Endothelial cell of umbilical vein (primary cell): ENCODE measurements at regions of chr9 and their contacts with region 1.

Region 1: DNA sequence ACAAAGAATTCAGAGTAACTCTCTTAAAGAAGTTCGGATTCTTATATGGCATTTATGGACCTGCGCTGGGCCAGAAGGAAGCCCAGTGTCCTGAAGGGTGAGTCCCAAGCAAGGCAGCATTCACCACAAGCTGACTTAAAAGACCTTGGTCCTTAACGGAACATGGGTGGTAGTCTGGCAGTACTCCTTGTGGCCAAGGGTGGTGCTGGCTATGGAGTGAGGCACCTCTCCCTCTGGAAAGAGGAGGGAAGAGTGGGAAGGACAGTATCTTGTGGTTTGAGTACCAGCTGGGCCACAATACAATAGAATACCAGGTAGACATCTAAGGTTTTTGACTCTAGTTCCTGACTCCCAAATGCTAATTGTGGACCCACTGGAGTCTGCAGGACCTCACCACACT is 425.7 kb upstream of the CYLC2 start:
- DNase-seq: no peak
- H3K4me3 ChIP-seq: no peak overlapping the region
- H3K27ac ChIP-seq: no peak overlapping the region
- H3K4me1 ChIP-seq: no peaks in the 10 kb centered on the region
- H3K27me3 ChIP-seq: no peaks in the 10 kb centered on the region
- CTCF ChIP-seq: no peak
- POLR2A ChIP-seq: no peak

Region 2: DNA sequence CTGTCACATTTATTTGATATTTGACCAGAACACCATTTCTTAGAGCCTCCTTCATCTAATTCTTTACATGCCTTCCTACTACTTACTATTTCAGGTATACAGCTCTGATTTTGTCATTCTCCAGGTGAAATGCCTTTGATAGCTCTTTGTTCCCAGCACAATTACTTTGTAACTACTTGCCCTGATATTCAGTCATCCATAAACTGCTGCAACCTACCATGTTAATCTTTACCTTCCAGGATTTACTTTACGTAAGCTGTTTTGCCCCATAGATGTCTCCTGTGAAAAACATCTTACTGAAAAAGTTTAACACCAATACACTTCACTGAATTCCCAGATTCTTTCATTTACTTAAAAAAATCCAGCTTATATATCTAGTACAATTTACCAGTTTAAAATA is 18.1 kb before region 1 on chr9:
- CTCF ChIA-PET with region 1: no interaction called
- POLR2A ChIA-PET with region 1: no interaction called
- dilution Hi-C with region 1: no loop called
- intact Hi-C with region 1: loop called (anchors 1 kb)
- DNase-seq: no peak
- H3K4me3 ChIP-seq: no peak overlapping the region
- H3K27ac ChIP-seq: no peak overlapping the region
- H3K4me1 ChIP-seq: no peaks in the 10 kb centered on the region
- H3K27me3 ChIP-seq: no peaks in the 10 kb centered on the region
- CTCF ChIP-seq: no peak
- POLR2A ChIP-seq: no peak

Region 3: GRCh38 chr9:102841376-102841775 is 271.9 kb after region 1 on chr9:
- CTCF ChIA-PET with region 1: no interaction called
- POLR2A ChIA-PET with region 1: no interaction called
- dilution Hi-C with region 1: no loop called
- intact Hi-C with region 1: no loop called
- DNase-seq: no peak
- H3K4me3 ChIP-seq: no peak overlapping the region
- H3K27ac ChIP-seq: no peak overlapping the region
- H3K4me1 ChIP-seq: no peaks in the 10 kb centered on the region
- H3K27me3 ChIP-seq: no peaks in the 10 kb centered on the region
- CTCF ChIP-seq: no peak
- POLR2A ChIP-seq: no peak